ENCODE measurements at regions of chr12 and their contacts with region 1.

Region 1: GRCh38 chr12:27534060-27534764 is 10.2 kb downstream of the PPFIBP1 start:
- DNase-seq: no peak
- ATAC-seq: no peak
- H3K4me3 ChIP-seq: no peak overlapping the region
- H3K27ac ChIP-seq: peak overlapping the region in 3 of 12 donors; percentile 14 to 25 (median 18)
- H3K4me1 ChIP-seq: peaks cover 13 to 87% (median 63%) of the 10 kb centered on the region in 12 donors
- H3K27me3 ChIP-seq: no peaks in the 10 kb centered on the region
- CTCF ChIP-seq: no peak
- POLR2A ChIP-seq: no peak

Region 2: GRCh38 chr12:27564612-27565213 is 30.5 kb after region 1 on chr12:
- intact Hi-C with region 1: loop called in 2 of 10 experiments (anchors 5 kb)
- DNase-seq: no peak
- ATAC-seq: peak in 3 of 4 donors; percentile 27 to 30 (median 29)
- H3K4me3 ChIP-seq: no peak overlapping the region
- H3K27ac ChIP-seq: peak overlapping the region in 10 of 12 donors; percentile 9 to 66 (median 38)
- H3K4me1 ChIP-seq: peaks cover 8 to 82% (median 59%) of the 10 kb centered on the region in 12 donors
- H3K27me3 ChIP-seq: no peaks in the 10 kb centered on the region
- CTCF ChIP-seq: no peak
- POLR2A ChIP-seq: no peak

Region 3: GRCh38 chr12:27635349-27635972 is 101.2 kb after region 1 on chr12:
- intact Hi-C with region 1: loop called in 4 of 10 experiments (anchors 5 kb)
- DNase-seq: no peak
- ATAC-seq: peak in 2 of 4 donors; percentile 24 to 26
- H3K4me3 ChIP-seq: no peak overlapping the region
- H3K27ac ChIP-seq: peak overlapping the region in 1 of 12 donors; percentile 11
- H3K4me1 ChIP-seq: peaks cover 0 to 55% (median 28%) of the 10 kb centered on the region in 12 donors
- H3K27me3 ChIP-seq: no peaks in the 10 kb centered on the region
- CTCF ChIP-seq: peak; percentile 44 to 77 (median 64)
- POLR2A ChIP-seq: no peak